A549 (cell line): ENCODE measurements at regions of chr15 and their contacts with region 1.

Region 1: DNA sequence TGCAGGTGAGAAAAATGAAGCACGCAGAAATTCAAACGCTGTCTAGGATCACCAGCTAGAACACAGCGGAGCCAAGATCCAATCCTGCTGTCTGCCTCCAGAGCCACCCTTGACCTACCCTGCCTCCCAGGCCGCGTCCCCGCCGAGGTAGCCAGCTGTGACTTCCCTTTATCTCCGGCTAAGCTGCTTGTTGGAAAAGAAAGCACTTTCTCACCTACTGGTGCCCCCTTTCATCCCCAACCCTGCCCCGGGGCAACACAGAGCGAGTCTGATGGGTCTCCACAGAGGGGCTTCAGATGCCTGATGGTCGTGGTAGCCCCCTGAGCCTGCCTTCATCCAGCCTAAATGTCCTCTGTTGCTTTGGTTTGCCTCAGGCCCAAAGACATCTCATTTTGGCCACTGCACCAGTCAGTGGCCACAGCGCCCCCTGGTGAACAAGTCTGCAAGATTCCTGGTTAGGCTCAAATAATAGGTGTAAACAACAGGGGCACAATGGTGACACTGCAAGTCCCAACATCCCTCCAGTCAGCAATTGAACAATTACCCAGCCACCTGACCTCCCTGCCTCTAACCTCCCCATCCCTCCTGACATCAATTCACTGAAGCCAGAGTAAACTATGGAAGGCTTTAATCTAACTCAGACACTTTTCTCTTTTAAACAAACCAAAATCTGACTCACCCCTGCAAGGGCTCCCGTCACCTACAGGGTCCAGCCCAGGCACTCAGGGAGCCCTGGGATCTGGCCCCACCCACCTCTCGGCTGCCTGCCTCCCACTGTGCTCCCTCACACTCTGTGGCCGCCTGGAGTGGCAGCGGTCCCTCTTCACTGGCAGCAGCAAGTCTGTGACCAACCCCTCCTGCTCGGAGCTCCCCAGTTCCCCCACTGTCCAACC is 27.3 kb upstream of the BCL2L10 start:
- DNase-seq: peak; percentile 79 to 92
- ATAC-seq: peak; percentile 66 to 87
- H3K4me3 ChIP-seq: no peak overlapping the region
- H3K27ac ChIP-seq: peak overlapping the region; percentile 67 to 83
- H3K4me1 ChIP-seq: peaks cover 50% of the 10 kb centered on the region
- CTCF ChIP-seq: peak; percentile 97
- EP300 ChIP-seq: no peak
- POLR2A ChIP-seq: no peak
- RAD21 ChIP-seq: peak; percentile 91 to 92

Region 2: DNA sequence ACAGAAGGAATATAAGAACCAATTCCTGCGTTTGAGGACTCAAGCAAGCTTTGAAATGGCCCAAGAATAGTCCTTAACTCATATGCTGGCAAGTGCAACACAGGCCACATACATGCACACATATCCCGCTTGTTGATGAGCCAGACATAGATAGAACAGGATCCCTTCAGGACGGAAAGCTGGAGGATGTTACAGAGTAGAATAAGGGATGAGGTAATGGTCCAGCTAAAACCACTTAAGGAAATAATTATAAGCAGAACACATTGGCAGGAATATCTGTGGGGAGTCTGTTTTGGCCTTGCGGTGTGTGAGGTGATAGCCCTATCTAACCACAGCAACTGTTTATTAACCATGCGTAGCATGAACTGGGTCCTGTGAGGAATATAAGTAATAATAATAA is 433.6 kb before region 1 on chr15:
- CTCF ChIA-PET with region 1: no interaction called
- POLR2A ChIA-PET with region 1: no interaction called
- DNase-seq: no peak
- ATAC-seq: no peak
- H3K4me3 ChIP-seq: no peak overlapping the region
- H3K27ac ChIP-seq: no peak overlapping the region
- H3K4me1 ChIP-seq: no peaks in the 10 kb centered on the region
- CTCF ChIP-seq: no peak
- EP300 ChIP-seq: no peak
- POLR2A ChIP-seq: no peak
- RAD21 ChIP-seq: no peak

Region 3: GRCh38 chr15:51971375-51972133 is 168.3 kb before region 1 on chr15 and contains the start of gene LEO1:
- CTCF ChIA-PET with region 1: interaction called, 18 read pairs
- POLR2A ChIA-PET with region 1: interaction called, 3 read pairs
- DNase-seq: peak; percentile 99
- ATAC-seq: peak; percentile 94 to 98
- H3K4me3 ChIP-seq: peak within 1 kb of the TSS; percentile 68
- H3K27ac ChIP-seq: peak within 1 kb of the TSS; percentile 83 to 95
- H3K4me1 ChIP-seq: peaks cover 13% of the 10 kb centered on the region
- CTCF ChIP-seq: peak; percentile 51
- EP300 ChIP-seq: no peak
- POLR2A ChIP-seq: peak; percentile 93
- RAD21 ChIP-seq: peak in 1 of 2 experiments; percentile 32; a peak in 1 of 5 replicates
- polyA plus RNA-seq, gene LEO1: 19.2 and 22.3 TPM in 2 replicates

Region 4: GRCh38 chr15:52071546-52071945 is 68.3 kb before region 1 on chr15:
- CTCF ChIA-PET with region 1: interaction called, 55 read pairs
- POLR2A ChIA-PET with region 1: no interaction called
- DNase-seq: no peak
- ATAC-seq: no peak
- H3K4me3 ChIP-seq: no peak overlapping the region
- H3K27ac ChIP-seq: peak overlapping the region in 1 of 2 experiments; percentile 9; a peak in 1 of 6 replicates
- H3K4me1 ChIP-seq: peaks cover 17% of the 10 kb centered on the region
- CTCF ChIP-seq: no peak
- EP300 ChIP-seq: no peak
- POLR2A ChIP-seq: no peak
- RAD21 ChIP-seq: no peak

Region 5: DNA sequence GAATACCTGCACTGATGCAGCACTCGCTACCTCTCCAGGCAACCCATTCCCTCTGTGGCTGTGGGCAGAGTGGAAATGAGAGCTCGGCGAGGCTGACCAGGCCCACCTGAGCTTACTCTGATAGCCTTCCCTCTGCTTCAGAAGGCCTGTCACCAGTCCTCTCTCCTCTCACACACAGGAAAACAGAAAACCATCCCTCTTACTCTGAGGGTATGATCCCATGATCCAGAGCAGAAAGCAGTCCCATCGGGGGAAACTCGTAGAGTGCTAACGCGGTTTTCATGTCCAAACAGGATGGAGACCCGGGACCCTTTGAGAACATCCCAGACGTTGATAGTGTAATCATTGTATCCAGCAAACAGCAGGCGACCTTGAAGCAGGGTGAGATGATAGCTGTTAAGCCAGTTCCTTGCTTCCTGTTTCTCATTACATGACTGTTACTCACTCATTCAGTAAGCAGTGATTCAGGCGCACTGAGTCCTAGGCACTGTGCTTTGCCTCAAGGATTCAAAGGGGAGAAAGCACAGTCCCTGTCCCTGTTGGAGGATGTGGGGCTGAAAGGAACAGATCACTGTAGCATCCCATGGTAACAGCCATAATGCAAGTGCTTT is 15.5 kb before region 1 on chr15:
- CTCF ChIA-PET with region 1: interaction called, 24 read pairs
- POLR2A ChIA-PET with region 1: no interaction called
- DNase-seq: no peak
- ATAC-seq: peak; percentile 21 to 51; a peak in 3 of 6 replicates
- H3K4me3 ChIP-seq: no peak overlapping the region
- H3K27ac ChIP-seq: peak overlapping the region in 1 of 2 experiments; percentile 8; a peak in 2 of 6 replicates
- H3K4me1 ChIP-seq: 0 out of 3 replicates have a peak, but pooled peaks cover 7% of the 10 kb centered on the region
- CTCF ChIP-seq: no peak
- EP300 ChIP-seq: no peak
- POLR2A ChIP-seq: no peak
- RAD21 ChIP-seq: no peak

Region 6: GRCh38 chr15:52163321-52164190 is 23.7 kb after region 1 on chr15:
- CTCF ChIA-PET with region 1: interaction called, 58 read pairs
- POLR2A ChIA-PET with region 1: no interaction called
- DNase-seq: no peak
- ATAC-seq: peak in 1 of 2 experiments; percentile 83; a peak in 3 of 6 replicates
- H3K4me3 ChIP-seq: no peak overlapping the region
- H3K27ac ChIP-seq: no peak overlapping the region
- H3K4me1 ChIP-seq: peaks cover 12% of the 10 kb centered on the region; the same call in 2 of the 3 replicates
- CTCF ChIP-seq: 0 out of 3 replicates have a peak, but pooled peaks have one; percentile 18
- EP300 ChIP-seq: no peak
- POLR2A ChIP-seq: no peak
- RAD21 ChIP-seq: peak in 1 of 2 experiments; percentile 37; a peak in 2 of 5 replicates